Right cardiac atrium (tissue), 5 donors: ENCODE measurements at regions of chr13 and their contacts with region 1.

Region 1: DNA sequence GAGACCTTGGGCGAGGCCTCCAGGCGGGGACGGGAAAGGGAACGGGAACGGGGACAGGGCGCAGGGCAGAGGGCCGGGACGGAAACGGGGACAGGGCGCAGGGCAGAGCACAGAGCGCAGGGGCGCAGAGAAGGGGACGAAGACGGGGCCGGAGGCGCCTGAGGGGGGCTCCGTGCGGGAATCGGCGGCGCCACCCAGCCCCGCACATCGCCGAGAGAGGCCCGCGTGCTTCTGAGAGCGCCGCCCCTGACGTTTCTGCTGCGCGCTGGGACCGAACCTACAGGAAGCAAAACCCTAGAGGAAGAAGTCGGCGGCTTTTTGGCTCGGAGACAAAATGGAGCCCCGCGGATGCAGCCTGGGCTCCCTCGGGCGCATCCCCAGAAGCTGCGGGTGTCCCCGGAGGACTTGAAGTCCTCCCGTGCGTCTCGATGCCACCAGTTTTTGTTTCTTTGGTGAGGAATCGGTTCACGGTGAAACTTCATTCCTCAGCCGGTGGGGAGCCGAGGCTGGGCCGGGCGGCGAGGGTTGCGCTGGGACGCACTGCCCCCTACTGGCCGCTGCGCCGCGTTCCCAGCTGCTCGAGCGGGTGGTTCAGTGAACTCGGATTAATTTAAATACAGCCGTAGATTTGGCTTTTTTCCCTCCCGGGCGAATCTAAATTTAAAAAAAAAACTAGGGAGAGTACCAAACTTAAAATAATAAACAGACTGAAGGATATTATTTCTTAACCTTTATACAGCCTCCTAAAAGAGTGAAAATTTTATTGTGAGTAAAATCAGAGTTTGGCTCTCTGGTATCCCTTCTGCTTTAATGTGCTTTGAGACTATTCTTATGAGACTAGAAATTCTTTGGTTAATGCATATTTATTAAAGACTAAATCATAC is 350.0 kb upstream of the ARGLU1 start:
- DNase-seq: peak; percentile 77 to 91 (median 90)
- ATAC-seq: peak; percentile 87 to 93
- H3K4me3 ChIP-seq: peak overlapping the region; percentile 62
- H3K27ac ChIP-seq: peak overlapping the region; percentile 76
- H3K4me1 ChIP-seq: no peaks in the 10 kb centered on the region
- H3K27me3 ChIP-seq: no peaks in the 10 kb centered on the region

Region 2: GRCh38 chr13:106418556-106418955 is 499.4 kb before region 1 on chr13:
- intact Hi-C with region 1: no loop called
- DNase-seq: no peak
- ATAC-seq: no peak
- H3K4me3 ChIP-seq: no peak overlapping the region
- H3K27ac ChIP-seq: no peak overlapping the region
- H3K4me1 ChIP-seq: no peaks in the 10 kb centered on the region
- H3K27me3 ChIP-seq: no peaks in the 10 kb centered on the region

Region 3: GRCh38 chr13:106536244-106537034 is 381.5 kb before region 1 on chr13:
- intact Hi-C with region 1: loop called in 1 of 4 experiments (anchors 5 kb)
- DNase-seq: peak; percentile 91 to 97 (median 96)
- ATAC-seq: peak; percentile 77 to 80
- H3K4me3 ChIP-seq: peak overlapping the region; percentile 88
- H3K27ac ChIP-seq: peak overlapping the region; percentile 57
- H3K4me1 ChIP-seq: peaks cover 2% of the 10 kb centered on the region
- H3K27me3 ChIP-seq: no peaks in the 10 kb centered on the region

Region 4: GRCh38 chr13:106619688-106620555 is 298.0 kb before region 1 on chr13:
- intact Hi-C with region 1: loop called in 1 of 4 experiments (anchors 5 kb)
- DNase-seq: peak in 1 of 3 donors; percentile 52
- ATAC-seq: peak; percentile 91
- H3K4me3 ChIP-seq: peak overlapping the region; percentile 14
- H3K27ac ChIP-seq: peak overlapping the region; percentile 42
- H3K4me1 ChIP-seq: no peaks in the 10 kb centered on the region
- H3K27me3 ChIP-seq: no peaks in the 10 kb centered on the region

Region 5: GRCh38 chr13:106701771-106702341 is 216.1 kb before region 1 on chr13:
- intact Hi-C with region 1: loop called in 1 of 4 experiments (anchors 5 kb)
- DNase-seq: peak; percentile 34 to 55 (median 50)
- ATAC-seq: peak; percentile 79 to 93
- H3K4me3 ChIP-seq: peak overlapping the region; percentile 8
- H3K27ac ChIP-seq: peak overlapping the region; percentile 87
- H3K4me1 ChIP-seq: no peaks in the 10 kb centered on the region
- H3K27me3 ChIP-seq: no peaks in the 10 kb centered on the region

Region 6: GRCh38 chr13:107138486-107138885 is 220.6 kb after region 1 on chr13:
- intact Hi-C with region 1: loop called in 1 of 4 experiments (anchors 10 kb)
- DNase-seq: no peak
- ATAC-seq: peak in 1 of 2 donors; percentile 64
- H3K4me3 ChIP-seq: no peak overlapping the region
- H3K27ac ChIP-seq: peak overlapping the region; percentile 37
- H3K4me1 ChIP-seq: peaks cover 6% of the 10 kb centered on the region
- H3K27me3 ChIP-seq: no peaks in the 10 kb centered on the region